CD8-positive, alpha-beta T cell (primary cell): ENCODE measurements at regions of chr9 and their contacts with region 1.

Region 1: DNA sequence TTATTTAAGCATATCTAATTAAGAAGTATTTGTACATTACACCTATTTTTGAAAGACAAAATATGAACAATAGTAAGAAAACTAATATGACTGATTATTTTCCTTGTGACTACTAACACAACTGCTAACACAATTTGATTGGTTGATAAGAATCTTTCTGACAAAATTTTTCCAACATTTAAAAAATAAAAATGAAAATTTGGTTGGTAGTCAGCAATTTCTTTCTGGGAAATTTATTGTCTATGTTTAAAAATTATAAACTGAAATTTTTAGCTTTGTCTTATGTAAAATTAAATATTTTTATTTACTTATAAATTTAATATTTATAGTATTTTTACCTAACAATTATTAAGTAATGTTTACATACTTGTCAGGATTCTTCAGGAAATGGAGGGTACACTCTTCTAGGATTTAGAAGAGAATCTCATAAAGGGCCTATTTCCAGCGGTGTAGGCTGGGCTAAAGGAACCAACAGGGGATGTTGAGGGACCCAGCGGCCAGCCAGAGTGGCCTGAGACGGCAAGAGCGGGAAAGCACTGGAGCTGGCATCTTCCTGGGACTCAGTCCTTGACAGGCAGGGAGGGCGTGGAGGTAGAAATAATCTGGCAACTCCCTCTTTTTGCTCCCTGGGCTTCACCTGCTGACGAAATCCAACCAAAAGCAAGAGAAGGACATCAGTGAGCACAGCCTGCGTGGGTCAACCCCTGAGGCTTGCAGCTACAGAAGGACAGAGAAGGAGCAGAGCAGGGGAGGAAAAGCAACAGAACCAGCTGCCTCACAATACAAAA is 14.6 kb upstream of the FAM120A start:
- DNase-seq: no peak
- ATAC-seq: no peak
- H3K4me3 ChIP-seq: no peak overlapping the region
- H3K4me3 Mint-ChIP-seq: no peak overlapping the region
- H3K27ac ChIP-seq: no peak overlapping the region
- H3K27ac Mint-ChIP-seq: no peak overlapping the region
- H3K4me1 ChIP-seq: no peaks in the 10 kb centered on the region
- H3K4me1 Mint-ChIP-seq: no peaks in the 10 kb centered on the region
- H3K27me3 ChIP-seq: no peaks in the 10 kb centered on the region
- H3K27me3 Mint-ChIP-seq: no peaks in the 10 kb centered on the region
- CTCF ChIP-seq: no peak

Region 2: DNA sequence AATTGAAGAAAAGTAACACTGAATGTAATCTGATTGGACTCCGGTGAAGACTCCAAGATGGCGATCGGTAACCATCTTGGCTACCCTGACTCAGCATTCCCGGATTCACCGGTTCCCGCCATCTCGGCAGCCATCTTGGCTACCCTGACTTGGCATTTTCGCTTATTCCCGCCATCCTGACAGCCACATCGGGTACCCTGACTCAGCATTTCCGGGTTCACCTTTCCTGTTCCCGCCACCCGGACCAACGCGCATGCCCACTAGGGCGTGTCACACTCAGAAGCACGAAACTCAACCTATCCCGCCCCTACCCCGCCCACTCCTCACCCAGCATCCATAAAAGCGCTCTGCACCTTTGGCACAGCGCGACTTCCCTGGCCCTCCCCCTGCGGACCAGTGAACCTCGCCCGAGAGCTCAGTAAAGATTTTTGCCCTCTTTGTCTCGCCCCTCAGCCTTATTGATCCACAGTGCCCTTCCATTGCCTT is 1338.8 kb before region 1 on chr9:
- CTCF ChIA-PET with region 1: no interaction called
- POLR2A ChIA-PET with region 1: no interaction called
- intact Hi-C with region 1: loop called in 1 of 2 experiments (anchors 5 kb)
- DNase-seq: peak in 7 of 9 experiments; percentile 4 to 73 (median 47)
- ATAC-seq: no peak
- H3K4me3 ChIP-seq: peak overlapping the region in 1 of 2 experiments; percentile 14
- H3K4me3 Mint-ChIP-seq: peak overlapping the region; percentile 11
- H3K27ac ChIP-seq: no peak overlapping the region
- H3K27ac Mint-ChIP-seq: no peak overlapping the region
- H3K4me1 ChIP-seq: peaks cover 4% of the 10 kb centered on the region
- H3K4me1 Mint-ChIP-seq: peaks cover 49% of the 10 kb centered on the region
- H3K27me3 ChIP-seq: no peaks in the 10 kb centered on the region
- H3K27me3 Mint-ChIP-seq: no peaks in the 10 kb centered on the region
- CTCF ChIP-seq: no peak

Region 3: GRCh38 chr9:92564504-92564903 is 872.3 kb before region 1 on chr9:
- CTCF ChIA-PET with region 1: no interaction called
- POLR2A ChIA-PET with region 1: no interaction called
- intact Hi-C with region 1: no loop called
- DNase-seq: no peak
- ATAC-seq: no peak
- H3K4me3 ChIP-seq: no peak overlapping the region
- H3K4me3 Mint-ChIP-seq: no peak overlapping the region
- H3K27ac ChIP-seq: no peak overlapping the region
- H3K27ac Mint-ChIP-seq: no peak overlapping the region
- H3K4me1 ChIP-seq: no peaks in the 10 kb centered on the region
- H3K4me1 Mint-ChIP-seq: no peaks in the 10 kb centered on the region
- H3K27me3 ChIP-seq: no peaks in the 10 kb centered on the region
- H3K27me3 Mint-ChIP-seq: no peaks in the 10 kb centered on the region
- CTCF ChIP-seq: no peak

Region 4: DNA sequence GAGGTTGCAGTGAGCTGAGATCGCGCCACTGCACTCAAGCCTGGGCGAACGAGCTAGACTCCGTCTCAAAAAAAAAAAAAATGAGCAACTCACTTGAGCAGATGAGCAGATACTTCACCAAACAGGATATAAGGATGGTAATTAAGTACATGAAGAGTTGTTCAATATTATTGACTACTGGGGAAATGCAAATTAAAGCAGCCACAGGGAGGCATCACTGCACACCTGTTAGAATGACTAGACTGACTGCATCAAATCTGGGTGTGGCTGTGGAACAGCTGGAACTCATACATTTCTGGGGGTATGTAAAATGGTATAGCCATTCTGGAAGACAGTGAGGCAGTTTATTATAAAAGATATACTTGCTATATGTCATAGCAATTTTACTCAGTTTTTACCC is 159.9 kb before region 1 on chr9:
- CTCF ChIA-PET with region 1: no interaction called
- POLR2A ChIA-PET with region 1: no interaction called
- intact Hi-C with region 1: no loop called
- DNase-seq: no peak
- ATAC-seq: no peak
- H3K4me3 ChIP-seq: no peak overlapping the region
- H3K4me3 Mint-ChIP-seq: no peak overlapping the region
- H3K27ac ChIP-seq: no peak overlapping the region
- H3K27ac Mint-ChIP-seq: no peak overlapping the region
- H3K4me1 ChIP-seq: no peaks in the 10 kb centered on the region
- H3K4me1 Mint-ChIP-seq: no peaks in the 10 kb centered on the region
- H3K27me3 ChIP-seq: peaks cover 3 to 4% of the 10 kb centered on the region in 2 experiments
- H3K27me3 Mint-ChIP-seq: peaks cover 16% of the 10 kb centered on the region
- CTCF ChIP-seq: no peak

Region 5: GRCh38 chr9:93297659-93298497 is 139.0 kb before region 1 on chr9:
- CTCF ChIA-PET with region 1: no interaction called
- POLR2A ChIA-PET with region 1: no interaction called
- intact Hi-C with region 1: no loop called
- DNase-seq: no peak
- ATAC-seq: no peak
- H3K4me3 ChIP-seq: no peak overlapping the region
- H3K4me3 Mint-ChIP-seq: no peak overlapping the region
- H3K27ac ChIP-seq: no peak overlapping the region
- H3K27ac Mint-ChIP-seq: no peak overlapping the region
- H3K4me1 ChIP-seq: no peaks in the 10 kb centered on the region
- H3K4me1 Mint-ChIP-seq: peaks cover 6% of the 10 kb centered on the region
- H3K27me3 ChIP-seq: no peaks in the 10 kb centered on the region
- H3K27me3 Mint-ChIP-seq: peaks cover 6% of the 10 kb centered on the region
- CTCF ChIP-seq: no peak

Region 6: GRCh38 chr9:93468763-93469456 is 32.1 kb after region 1 on chr9:
- CTCF ChIA-PET with region 1: no interaction called
- POLR2A ChIA-PET with region 1: no interaction called
- intact Hi-C with region 1: no loop called
- DNase-seq: no peak
- ATAC-seq: no peak
- H3K4me3 ChIP-seq: no peak overlapping the region
- H3K4me3 Mint-ChIP-seq: no peak overlapping the region
- H3K27ac ChIP-seq: no peak overlapping the region
- H3K27ac Mint-ChIP-seq: peak overlapping the region; percentile 34
- H3K4me1 ChIP-seq: peaks cover 40% of the 10 kb centered on the region
- H3K4me1 Mint-ChIP-seq: peaks cover 72% of the 10 kb centered on the region
- H3K27me3 ChIP-seq: no peaks in the 10 kb centered on the region
- H3K27me3 Mint-ChIP-seq: no peaks in the 10 kb centered on the region
- CTCF ChIP-seq: no peak